ENCODE measurements at regions of chr10 and their contacts with region 1.

Region 1: GRCh38 chr10:112446855-112447711 is at the starts of genes VTI1A and ZDHHC6:
- DNase-seq: peak; percentile 84 to 87 (median 86)
- H3K4me3 ChIP-seq: peak within 1 kb of the TSS; percentile 97 to 99
- H3K4me3 Mint-ChIP-seq: peak within 1 kb of the TSS; percentile 90 to 100 (median 94)
- H3K27ac ChIP-seq: peak within 1 kb of the TSS; percentile 86
- H3K27ac Mint-ChIP-seq: peak within 1 kb of the TSS; percentile 81 to 99 (median 97)
- H3K4me1 ChIP-seq: peaks cover 42% of the 10 kb centered on the region
- H3K4me1 Mint-ChIP-seq: peaks cover 26 to 64% (median 50%) of the 10 kb centered on the region in 4 donors
- H3K27me3 ChIP-seq: no peaks in the 10 kb centered on the region
- H3K27me3 Mint-ChIP-seq: no peaks in the 10 kb centered on the region
- total RNA-seq, gene VTI1A: 47.0 to 48.5 TPM
- total RNA-seq, gene ZDHHC6: 60.6 to 61.2 TPM

Region 2: DNA sequence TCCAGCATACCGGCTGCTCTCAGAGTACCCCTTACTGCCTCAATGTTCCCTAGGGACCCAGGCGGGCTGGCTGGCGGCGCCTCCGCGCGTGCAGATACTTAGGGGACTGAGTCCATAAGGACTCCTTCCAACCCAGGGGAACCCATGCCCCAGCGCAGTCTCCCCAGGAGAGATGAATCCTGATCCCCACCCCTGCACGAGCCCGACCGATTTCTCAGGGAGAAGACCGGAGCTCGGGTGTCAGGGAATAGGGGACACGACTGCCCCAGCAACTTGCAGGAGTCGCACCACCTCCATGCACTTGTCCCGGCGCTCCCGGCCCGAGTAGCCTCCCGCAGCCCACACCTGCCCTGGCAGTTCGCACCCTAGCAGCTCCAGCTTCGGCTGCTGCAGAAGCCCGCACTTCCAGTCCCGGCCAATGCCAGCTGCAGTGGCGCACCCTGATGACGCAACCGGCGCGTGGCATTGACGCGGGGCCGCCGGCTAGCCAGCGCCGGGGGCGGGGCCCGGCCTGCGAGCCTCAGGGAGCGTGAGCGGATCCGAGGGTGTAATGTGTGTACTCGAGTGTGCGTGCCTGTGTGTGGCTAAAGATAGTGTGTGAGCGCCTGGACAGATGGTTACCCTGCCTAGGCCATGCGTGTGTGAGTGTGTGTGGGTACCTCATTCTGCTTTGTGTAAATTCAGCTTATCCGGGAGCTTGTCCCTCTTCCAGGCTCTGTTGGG is 263.6 kb before region 1 on chr10 and contains the start of gene GPAM:
- CTCF ChIA-PET with region 1: no interaction called
- POLR2A ChIA-PET with region 1: interaction called, 13 read pairs
- intact Hi-C with region 1: loop called (anchors 1 kb)
- DNase-seq: peak; percentile 93 to 99 (median 95)
- H3K4me3 ChIP-seq: peak within 1 kb of the TSS; percentile 85 to 95
- H3K4me3 Mint-ChIP-seq: peak within 1 kb of the TSS; percentile 83 to 98 (median 94)
- H3K27ac ChIP-seq: peak within 1 kb of the TSS; percentile 59
- H3K27ac Mint-ChIP-seq: peak within 1 kb of the TSS; percentile 85 to 98 (median 97)
- H3K4me1 ChIP-seq: peaks cover 18% of the 10 kb centered on the region
- H3K4me1 Mint-ChIP-seq: peaks cover 17 to 43% (median 26%) of the 10 kb centered on the region in 4 donors
- H3K27me3 ChIP-seq: no peaks in the 10 kb centered on the region
- H3K27me3 Mint-ChIP-seq: peaks cover 0 to 1% of the 10 kb centered on the region in 2 donors
- total RNA-seq, gene GPAM: 6.3 to 8.8 TPM

Region 3: GRCh38 chr10:112369495-112370423 is 77.3 kb before region 1 on chr10:
- CTCF ChIA-PET with region 1: no interaction called
- POLR2A ChIA-PET with region 1: interaction called, 33 read pairs
- intact Hi-C with region 1: no loop called
- DNase-seq: peak; percentile 54 to 65 (median 57)
- H3K4me3 ChIP-seq: no peak overlapping the region
- H3K4me3 Mint-ChIP-seq: peak overlapping the region in 7 of 8 donors; percentile 9 to 72 (median 61)
- H3K27ac ChIP-seq: no peak overlapping the region
- H3K27ac Mint-ChIP-seq: peak overlapping the region; percentile 74 to 91 (median 79)
- H3K4me1 ChIP-seq: peaks cover 32% of the 10 kb centered on the region
- H3K4me1 Mint-ChIP-seq: peaks cover 19 to 38% (median 30%) of the 10 kb centered on the region in 4 donors
- H3K27me3 ChIP-seq: no peaks in the 10 kb centered on the region
- H3K27me3 Mint-ChIP-seq: no peaks in the 10 kb centered on the region

Region 4: GRCh38 chr10:112389147-112389822 is 57.8 kb before region 1 on chr10:
- CTCF ChIA-PET with region 1: no interaction called
- POLR2A ChIA-PET with region 1: interaction called, 11 read pairs
- intact Hi-C with region 1: no loop called
- DNase-seq: peak; percentile 48 to 85 (median 69)
- H3K4me3 ChIP-seq: no peak overlapping the region
- H3K4me3 Mint-ChIP-seq: peak overlapping the region in 7 of 8 donors; percentile 22 to 75 (median 52)
- H3K27ac ChIP-seq: peak overlapping the region; percentile 64
- H3K27ac Mint-ChIP-seq: peak overlapping the region; percentile 82 to 92 (median 88)
- H3K4me1 ChIP-seq: peaks cover 42% of the 10 kb centered on the region
- H3K4me1 Mint-ChIP-seq: peaks cover 52 to 77% (median 62%) of the 10 kb centered on the region in 4 donors
- H3K27me3 ChIP-seq: no peaks in the 10 kb centered on the region
- H3K27me3 Mint-ChIP-seq: no peaks in the 10 kb centered on the region

Region 5: DNA sequence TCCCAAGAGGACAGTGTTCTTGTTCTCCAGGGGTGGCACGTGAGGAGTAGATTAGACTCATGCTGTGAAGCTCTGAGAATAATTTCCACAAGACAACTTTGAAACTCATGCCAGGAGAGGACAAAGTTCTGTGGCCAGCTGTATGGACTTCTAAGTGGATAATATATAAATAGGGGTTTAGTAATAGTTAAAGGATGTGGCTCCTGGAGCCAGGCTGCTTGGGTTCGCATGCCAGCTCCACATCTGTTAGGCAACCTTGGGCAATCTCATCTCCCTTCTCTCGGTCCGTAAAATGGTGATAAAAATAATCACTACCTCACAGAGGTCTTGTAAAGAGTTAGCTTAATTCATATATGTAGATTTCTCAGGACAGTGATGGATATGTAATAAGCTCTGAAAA is 37.3 kb before region 1 on chr10:
- CTCF ChIA-PET with region 1: no interaction called
- POLR2A ChIA-PET with region 1: no interaction called
- intact Hi-C with region 1: no loop called
- DNase-seq: no peak
- H3K4me3 ChIP-seq: no peak overlapping the region
- H3K4me3 Mint-ChIP-seq: no peak overlapping the region
- H3K27ac ChIP-seq: no peak overlapping the region
- H3K27ac Mint-ChIP-seq: peak overlapping the region in 2 of 7 donors; percentile 14 to 36
- H3K4me1 ChIP-seq: no peaks in the 10 kb centered on the region
- H3K4me1 Mint-ChIP-seq: no peaks in the 10 kb centered on the region
- H3K27me3 ChIP-seq: no peaks in the 10 kb centered on the region
- H3K27me3 Mint-ChIP-seq: no peaks in the 10 kb centered on the region

Region 6: GRCh38 chr10:112481602-112482001 is 34.5 kb after region 1 on chr10:
- CTCF ChIA-PET with region 1: no interaction called
- POLR2A ChIA-PET with region 1: no interaction called
- intact Hi-C with region 1: no loop called
- DNase-seq: no peak
- H3K4me3 ChIP-seq: no peak overlapping the region
- H3K4me3 Mint-ChIP-seq: no peak overlapping the region
- H3K27ac ChIP-seq: no peak overlapping the region
- H3K27ac Mint-ChIP-seq: no peak overlapping the region
- H3K4me1 ChIP-seq: no peaks in the 10 kb centered on the region
- H3K4me1 Mint-ChIP-seq: peaks cover 4 to 8% (median 6%) of the 10 kb centered on the region in 4 donors
- H3K27me3 ChIP-seq: no peaks in the 10 kb centered on the region
- H3K27me3 Mint-ChIP-seq: no peaks in the 10 kb centered on the region

Measured in CD4-positive, alpha-beta memory T cell (primary cell).